ENCODE measurements at regions of chr1 and their contacts with region 1.

Region 1: GRCh38 chr1:34845131-34845901 is 14.2 kb downstream of the SMIM12 start:
- DNase-seq: peak in 2 of 3 donors; percentile 53 to 58
- ATAC-seq: peak; percentile 44 to 79
- H3K4me3 ChIP-seq: no peak overlapping the region
- H3K27ac ChIP-seq: peak overlapping the region; percentile 60
- H3K4me1 ChIP-seq: peaks cover 19% of the 10 kb centered on the region
- H3K27me3 ChIP-seq: no peaks in the 10 kb centered on the region

Region 2: DNA sequence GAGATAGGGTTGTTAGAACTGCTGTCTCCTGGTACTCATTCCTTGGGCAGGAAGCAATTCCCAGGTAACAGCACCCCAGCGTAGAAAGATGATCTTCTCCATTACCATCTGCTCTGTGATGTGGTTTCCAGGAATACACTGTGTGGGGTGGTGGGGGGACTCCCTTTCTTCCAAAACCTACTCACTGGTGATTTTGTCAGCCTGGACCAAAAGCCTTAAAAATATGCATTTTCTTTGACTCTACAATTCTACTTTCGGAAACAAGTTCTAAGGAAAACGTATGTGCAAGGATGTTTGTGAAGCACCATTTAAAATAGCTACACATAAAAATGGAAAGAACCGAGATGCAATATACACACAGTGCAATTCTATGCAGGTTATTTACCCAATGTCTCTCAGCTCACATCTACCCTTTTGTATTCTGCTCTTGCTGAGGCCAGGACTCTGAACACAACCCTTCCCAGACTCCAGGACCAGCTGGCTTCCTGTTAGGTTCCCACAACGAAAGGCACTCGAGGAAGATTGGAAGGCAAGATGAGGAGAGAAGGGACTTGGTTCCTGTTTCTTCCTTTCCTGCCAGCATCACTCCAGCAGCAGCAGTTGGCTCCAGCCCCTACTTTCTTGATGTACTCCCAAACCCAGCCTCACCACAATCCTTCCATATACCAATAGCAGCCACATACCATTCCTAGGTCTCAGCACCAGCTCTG is 123.5 kb before region 1 on chr1:
- intact Hi-C with region 1: no loop called
- DNase-seq: no peak
- ATAC-seq: no peak
- H3K4me3 ChIP-seq: no peak overlapping the region
- H3K27ac ChIP-seq: no peak overlapping the region
- H3K4me1 ChIP-seq: no peaks in the 10 kb centered on the region
- H3K27me3 ChIP-seq: no peaks in the 10 kb centered on the region

Region 3: DNA sequence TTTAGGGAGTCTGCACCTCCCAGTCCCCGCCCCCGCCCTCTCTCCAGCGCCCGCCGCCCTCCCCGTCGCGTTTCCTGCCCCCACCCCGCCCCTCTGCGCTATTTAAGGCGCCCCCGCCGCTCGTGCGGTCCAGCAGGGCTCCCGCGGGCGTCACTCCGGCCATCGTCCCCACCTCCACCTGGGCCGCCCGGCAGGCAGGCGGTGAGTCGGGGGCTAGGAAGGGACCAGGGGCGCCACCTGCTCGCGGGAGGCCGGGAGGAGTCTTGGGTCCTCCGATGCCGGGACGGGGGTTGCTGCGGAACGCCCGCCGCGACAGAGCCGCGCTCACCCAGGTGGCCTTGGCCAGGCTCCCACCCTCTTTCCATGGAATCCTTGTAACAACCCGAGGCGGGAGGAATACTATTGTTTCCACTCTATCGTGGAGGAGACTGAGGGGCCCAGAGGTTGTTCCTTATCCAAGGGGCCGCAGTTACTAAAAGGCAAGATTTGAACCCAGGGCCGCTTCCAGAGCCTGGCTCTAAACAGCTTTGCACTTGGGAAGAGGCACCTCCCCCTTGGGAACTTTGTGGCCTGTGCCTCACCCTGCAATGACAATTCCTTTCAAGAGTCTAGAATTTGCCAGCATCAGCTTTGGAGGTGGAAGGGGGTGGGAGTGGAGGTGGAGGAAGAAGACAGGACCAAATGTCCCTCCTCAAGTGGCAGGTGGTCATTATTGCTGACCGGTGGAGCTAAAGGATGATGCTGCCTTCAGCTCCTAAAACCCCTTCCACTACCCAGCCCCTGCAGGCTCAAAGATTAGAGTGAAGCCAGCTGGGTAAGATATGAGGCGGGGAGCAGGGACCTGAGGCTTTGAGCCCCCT is 52.2 kb before region 1 on chr1 and contains the start of gene GJA4:
- intact Hi-C with region 1: loop called in 3 of 4 experiments (anchors 5 kb)
- DNase-seq: peak; percentile 40 to 83 (median 72)
- ATAC-seq: peak; percentile 44 to 70
- H3K4me3 ChIP-seq: peak within 1 kb of the TSS; percentile 45
- H3K27ac ChIP-seq: peak within 1 kb of the TSS; percentile 15
- H3K4me1 ChIP-seq: no peaks in the 10 kb centered on the region
- H3K27me3 ChIP-seq: no peaks in the 10 kb centered on the region
- total RNA-seq, gene GJA4: 18.0 to 31.4 (median 27.0) TPM

Measured in right cardiac atrium (tissue), 5 donors.